ENCODE measurements at regions of chr1 and their contacts with region 1.

Region 1: DNA sequence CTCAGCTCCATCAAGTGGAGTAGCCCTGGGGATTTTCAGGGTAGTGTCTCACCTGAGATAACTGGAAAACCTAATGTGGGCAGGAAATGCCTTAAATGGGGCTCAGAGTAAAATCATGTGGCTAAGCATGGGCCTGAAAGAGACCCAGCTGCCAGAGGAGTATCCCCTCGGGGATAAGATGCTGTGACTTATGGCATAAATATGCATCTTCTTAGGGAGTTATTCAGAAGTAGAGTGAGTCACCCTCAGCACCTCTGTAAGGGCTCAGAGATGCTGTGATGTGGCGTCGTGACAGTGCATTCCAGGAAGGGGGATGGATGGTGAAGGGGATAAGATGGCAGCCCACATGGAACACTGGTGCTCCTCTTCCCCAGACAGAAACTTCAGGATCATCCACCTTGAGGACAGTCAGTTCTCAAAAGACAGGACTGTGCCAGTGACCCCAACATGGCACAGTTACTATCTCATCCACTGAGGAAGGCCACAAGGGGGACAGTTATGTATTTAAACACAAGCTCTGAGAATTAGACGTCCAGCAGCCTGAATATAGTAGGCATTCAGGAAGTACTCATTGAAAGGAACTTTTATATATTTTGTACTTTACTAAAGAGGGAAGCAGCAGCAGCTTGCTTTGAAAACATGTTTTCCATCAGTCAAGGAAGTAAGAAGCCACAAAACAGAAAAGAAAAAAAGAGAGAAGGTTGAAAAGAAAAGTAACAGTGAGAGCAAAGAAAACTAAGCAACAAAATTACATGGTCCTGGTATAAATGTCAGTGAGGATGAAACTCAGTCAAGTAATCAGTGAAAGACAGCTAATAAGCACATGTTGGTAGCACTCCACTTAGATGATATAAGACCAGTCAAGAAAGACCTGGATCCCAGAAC is 8.3 kb downstream of the IL24 start:
- DNase-seq: no peak
- H3K4me3 ChIP-seq: no peak overlapping the region
- H3K4me3 Mint-ChIP-seq: peak overlapping the region; percentile 49 to 80 (median 69)
- H3K27ac ChIP-seq: peak overlapping the region; percentile 31
- H3K27ac Mint-ChIP-seq: peak overlapping the region; percentile 67 to 95 (median 85)
- H3K4me1 ChIP-seq: peaks cover 60% of the 10 kb centered on the region
- H3K4me1 Mint-ChIP-seq: peaks cover 45 to 78% (median 60%) of the 10 kb centered on the region in 4 donors
- H3K27me3 ChIP-seq: no peaks in the 10 kb centered on the region
- H3K27me3 Mint-ChIP-seq: no peaks in the 10 kb centered on the region

Region 2: GRCh38 chr1:206865013-206865671 is 40.4 kb before region 1 on chr1 and contains the start of gene IL20:
- CTCF ChIA-PET with region 1: interaction called, 17 read pairs
- POLR2A ChIA-PET with region 1: interaction called, 4 read pairs
- intact Hi-C with region 1: no loop called
- DNase-seq: peak; percentile 73 to 79 (median 77)
- H3K4me3 ChIP-seq: no peak within 1 kb of the TSS
- H3K4me3 Mint-ChIP-seq: peak within 1 kb of the TSS in 1 of 8 donors; percentile 6
- H3K27ac ChIP-seq: no peak within 1 kb of the TSS
- H3K27ac Mint-ChIP-seq: peak within 1 kb of the TSS in 2 of 7 donors; percentile 15 to 55
- H3K4me1 ChIP-seq: no peaks in the 10 kb centered on the region
- H3K4me1 Mint-ChIP-seq: peaks cover 0 to 5% (median 4%) of the 10 kb centered on the region in 4 donors
- H3K27me3 ChIP-seq: no peaks in the 10 kb centered on the region
- H3K27me3 Mint-ChIP-seq: peaks cover 16% of the 10 kb centered on the region in 2 donors
- total RNA-seq, gene IL20: not detected

Region 3: GRCh38 chr1:206930210-206930798 is 24.8 kb after region 1 on chr1:
- CTCF ChIA-PET with region 1: interaction called, 66 read pairs
- POLR2A ChIA-PET with region 1: interaction called, 21 read pairs
- intact Hi-C with region 1: no loop called
- DNase-seq: no peak
- H3K4me3 ChIP-seq: no peak overlapping the region
- H3K4me3 Mint-ChIP-seq: peak overlapping the region; percentile 2 to 70 (median 54)
- H3K27ac ChIP-seq: no peak overlapping the region
- H3K27ac Mint-ChIP-seq: peak overlapping the region; percentile 81 to 93 (median 88)
- H3K4me1 ChIP-seq: peaks cover 39% of the 10 kb centered on the region
- H3K4me1 Mint-ChIP-seq: peaks cover 25 to 55% (median 34%) of the 10 kb centered on the region in 4 donors
- H3K27me3 ChIP-seq: no peaks in the 10 kb centered on the region
- H3K27me3 Mint-ChIP-seq: no peaks in the 10 kb centered on the region